Calu3 (cell line): ENCODE measurements at regions of chr5 and their contacts with region 1.

Region 1: DNA sequence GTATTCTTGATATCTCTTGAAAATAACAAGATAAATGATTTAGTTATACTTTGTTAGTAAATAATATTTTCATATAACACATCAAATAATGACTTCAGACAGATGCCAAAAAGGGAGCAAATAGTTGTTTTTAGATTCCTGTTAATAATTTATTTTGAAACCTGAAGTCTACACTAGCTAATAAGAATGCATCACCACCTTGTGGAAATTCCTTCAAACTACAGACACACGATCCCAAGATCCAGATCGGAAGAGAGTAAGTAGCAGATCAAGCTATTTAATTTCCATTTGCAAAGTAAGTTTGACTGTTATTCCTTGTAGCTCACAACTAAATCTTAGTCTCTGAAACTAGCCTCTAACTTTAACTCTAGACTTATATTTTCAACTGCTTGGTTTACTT is 35.5 kb upstream of the ISL1 start:
- DNase-seq: no peak
- H3K4me3 Mint-ChIP-seq: no peak overlapping the region
- H3K27ac Mint-ChIP-seq: no peak overlapping the region
- H3K4me1 Mint-ChIP-seq: peaks cover 23% of the 10 kb centered on the region
- H3K27me3 Mint-ChIP-seq: no peaks in the 10 kb centered on the region
- CTCF ChIP-seq: peak; percentile 19

Region 2: DNA sequence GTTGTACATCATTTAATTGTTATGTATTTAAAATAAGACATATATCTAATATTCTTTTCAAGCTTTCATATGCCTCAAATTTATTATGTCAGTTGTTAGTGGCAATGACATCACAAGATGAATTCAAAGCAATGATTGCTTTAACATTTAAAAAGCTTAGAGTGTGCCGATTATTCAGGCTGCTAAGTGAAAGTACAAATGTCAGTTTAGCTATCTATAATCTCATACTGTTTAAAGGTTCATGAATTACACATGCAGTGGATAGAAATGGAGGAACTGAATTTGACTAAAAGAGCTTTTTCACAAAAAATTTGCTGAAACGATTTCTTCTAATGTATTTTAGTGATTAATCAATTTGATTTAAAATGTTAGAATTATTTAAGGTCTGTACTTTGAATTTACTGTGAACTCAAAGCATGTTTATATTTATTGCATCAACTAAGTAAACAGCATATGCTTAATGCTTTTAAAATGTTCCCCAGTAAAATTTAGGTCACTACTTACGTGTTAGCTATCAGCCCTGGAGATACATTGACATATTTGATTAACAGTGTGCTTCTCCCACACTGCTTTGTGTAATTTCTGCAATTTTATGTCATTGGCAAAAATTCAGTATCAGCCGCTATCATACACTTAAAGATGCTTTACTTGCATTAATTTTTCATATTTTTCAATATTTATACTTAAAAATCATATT is 346.3 kb before region 1 on chr5:
- CTCF ChIA-PET with region 1: no interaction called
- intact Hi-C with region 1: no loop called
- DNase-seq: no peak
- H3K4me3 Mint-ChIP-seq: no peak overlapping the region
- H3K27ac Mint-ChIP-seq: no peak overlapping the region
- H3K4me1 Mint-ChIP-seq: no peaks in the 10 kb centered on the region
- H3K27me3 Mint-ChIP-seq: no peaks in the 10 kb centered on the region
- CTCF ChIP-seq: no peak

Region 3: GRCh38 chr5:51138164-51138563 is 209.5 kb before region 1 on chr5:
- CTCF ChIA-PET with region 1: no interaction called
- intact Hi-C with region 1: loop called (anchors 5 kb)
- DNase-seq: no peak
- H3K4me3 Mint-ChIP-seq: no peak overlapping the region
- H3K27ac Mint-ChIP-seq: no peak overlapping the region
- H3K4me1 Mint-ChIP-seq: no peaks in the 10 kb centered on the region
- H3K27me3 Mint-ChIP-seq: no peaks in the 10 kb centered on the region
- CTCF ChIP-seq: no peak

Region 4: DNA sequence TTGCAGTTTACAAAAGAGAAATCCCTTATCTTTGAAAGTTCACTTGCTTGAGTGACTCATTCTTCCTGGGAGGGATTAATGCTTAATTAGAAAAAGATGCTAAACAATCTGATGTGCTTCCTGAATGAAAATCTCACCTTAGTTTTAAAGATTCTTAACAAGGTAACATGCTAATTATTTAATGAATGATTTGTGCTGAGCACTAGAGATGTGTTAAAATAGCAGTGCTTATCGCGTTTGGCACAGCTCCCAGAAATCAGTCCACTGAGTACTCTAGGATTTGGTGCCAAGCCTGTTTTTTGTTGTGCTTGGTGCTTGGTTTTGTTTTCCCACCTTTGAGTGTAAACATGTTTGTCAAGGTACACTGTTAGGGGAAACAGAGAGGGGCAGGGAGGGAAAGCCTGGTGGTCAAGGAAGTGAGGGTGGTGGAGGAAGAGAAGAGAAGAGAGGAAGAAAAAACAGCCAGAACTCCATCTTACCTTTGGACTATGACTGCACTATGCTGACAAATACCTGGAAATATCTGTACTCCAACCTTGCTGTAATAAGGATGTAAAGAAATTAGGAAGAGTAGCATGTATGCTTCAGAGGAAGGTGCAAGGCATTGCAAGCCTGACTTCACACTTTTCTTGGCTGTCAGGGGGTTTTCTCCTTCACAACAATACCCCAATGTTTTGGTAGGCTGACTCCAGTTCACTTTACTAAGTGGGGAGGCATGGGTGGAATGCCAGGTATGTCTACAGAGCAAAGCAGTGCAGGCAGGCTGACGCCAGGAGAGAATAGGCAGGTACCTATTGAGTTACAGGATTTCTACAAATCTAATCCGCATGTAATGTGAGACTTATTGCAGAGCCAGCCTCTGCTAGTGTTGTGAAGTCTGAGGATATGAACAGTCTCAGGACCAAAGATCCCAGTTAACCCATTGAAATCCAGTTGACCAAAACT is 121.6 kb before region 1 on chr5:
- CTCF ChIA-PET with region 1: no interaction called
- intact Hi-C with region 1: loop called (anchors 10 kb)
- DNase-seq: peak; percentile 74
- H3K4me3 Mint-ChIP-seq: peak overlapping the region; percentile 49
- H3K27ac Mint-ChIP-seq: peak overlapping the region; percentile 66
- H3K4me1 Mint-ChIP-seq: peaks cover 23% of the 10 kb centered on the region
- H3K27me3 Mint-ChIP-seq: no peaks in the 10 kb centered on the region
- CTCF ChIP-seq: no peak

Region 5: GRCh38 chr5:51279983-51280706 is 67.6 kb before region 1 on chr5:
- CTCF ChIA-PET with region 1: no interaction called
- intact Hi-C with region 1: loop called (anchors 10 kb)
- DNase-seq: no peak
- H3K4me3 Mint-ChIP-seq: no peak overlapping the region
- H3K27ac Mint-ChIP-seq: no peak overlapping the region
- H3K4me1 Mint-ChIP-seq: no peaks in the 10 kb centered on the region
- H3K27me3 Mint-ChIP-seq: no peaks in the 10 kb centered on the region
- CTCF ChIP-seq: no peak